ENCODE measurements at regions of chr12 and their contacts with region 1.

Region 1: GRCh38 chr12:111396726-111397445 is 8.8 kb upstream of the SH2B3 start:
- DNase-seq: peak; percentile 85 to 87
- ATAC-seq: peak; percentile 87 to 97
- H3K4me3 ChIP-seq: peak overlapping the region; percentile 33
- H3K27ac ChIP-seq: peak overlapping the region; percentile 66 to 83
- H3K4me1 ChIP-seq: peaks cover 6% of the 10 kb centered on the region; the same call in 1 of the 3 replicates
- CTCF ChIP-seq: peak; percentile 99
- EP300 ChIP-seq: no peak; a peak in 1 of 5 replicates
- POLR2A ChIP-seq: no peak
- RAD21 ChIP-seq: peak; percentile 96 to 97

Region 2: DNA sequence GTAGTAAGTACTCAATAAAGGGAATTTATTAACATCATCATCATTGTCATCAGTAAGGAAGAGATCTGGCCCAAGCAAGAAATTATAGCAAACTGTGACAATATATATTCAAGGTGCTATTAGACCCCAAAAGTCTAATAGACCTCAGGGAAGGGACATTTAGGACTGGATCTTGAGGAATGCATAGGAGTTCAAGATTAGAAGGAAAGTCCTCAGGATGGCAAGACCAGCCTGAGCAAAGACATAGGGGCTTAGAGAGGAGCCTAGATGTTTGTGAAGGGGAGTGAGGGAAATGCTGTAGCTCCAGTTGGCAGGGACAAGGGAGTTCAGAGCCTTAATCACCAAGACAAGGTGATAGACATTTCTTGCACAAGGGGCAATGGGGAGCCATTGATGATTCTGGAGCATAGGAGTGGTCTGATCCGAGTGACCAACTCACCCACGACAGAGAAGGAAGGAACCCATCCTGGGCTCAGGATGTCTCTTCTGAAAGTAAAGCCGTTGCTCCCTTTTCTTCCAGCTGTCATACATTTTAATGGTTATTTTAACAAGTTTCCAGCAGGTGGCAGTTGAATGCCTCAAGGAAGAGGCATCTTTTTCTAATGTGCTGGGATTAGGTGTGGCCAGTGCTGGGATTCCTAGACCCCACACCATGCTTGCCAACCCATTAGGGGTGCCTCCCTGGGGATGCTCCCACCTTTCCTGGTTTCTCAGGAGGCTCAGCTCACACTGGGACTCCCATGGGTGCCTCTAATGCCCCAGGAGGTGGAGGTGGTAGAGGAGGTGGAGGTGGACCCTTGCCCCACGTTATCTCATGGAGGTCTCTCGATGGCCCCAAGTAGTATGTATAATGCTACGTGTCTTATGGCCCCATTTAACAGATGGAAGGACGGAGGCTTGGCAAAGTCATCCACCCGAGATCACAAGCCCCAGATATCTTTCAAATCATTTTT is 65.8 kb before region 1 on chr12:
- CTCF ChIA-PET with region 1: interaction called, 44 read pairs
- POLR2A ChIA-PET with region 1: no interaction called
- DNase-seq: peak; percentile 74 to 78
- ATAC-seq: peak; percentile 71 to 82
- H3K4me3 ChIP-seq: no peak overlapping the region
- H3K27ac ChIP-seq: no peak overlapping the region
- H3K4me1 ChIP-seq: no peaks in the 10 kb centered on the region
- CTCF ChIP-seq: peak; percentile 64
- EP300 ChIP-seq: no peak
- POLR2A ChIP-seq: no peak
- RAD21 ChIP-seq: peak; percentile 63 to 77; a peak in 4 of 5 replicates

Region 3: DNA sequence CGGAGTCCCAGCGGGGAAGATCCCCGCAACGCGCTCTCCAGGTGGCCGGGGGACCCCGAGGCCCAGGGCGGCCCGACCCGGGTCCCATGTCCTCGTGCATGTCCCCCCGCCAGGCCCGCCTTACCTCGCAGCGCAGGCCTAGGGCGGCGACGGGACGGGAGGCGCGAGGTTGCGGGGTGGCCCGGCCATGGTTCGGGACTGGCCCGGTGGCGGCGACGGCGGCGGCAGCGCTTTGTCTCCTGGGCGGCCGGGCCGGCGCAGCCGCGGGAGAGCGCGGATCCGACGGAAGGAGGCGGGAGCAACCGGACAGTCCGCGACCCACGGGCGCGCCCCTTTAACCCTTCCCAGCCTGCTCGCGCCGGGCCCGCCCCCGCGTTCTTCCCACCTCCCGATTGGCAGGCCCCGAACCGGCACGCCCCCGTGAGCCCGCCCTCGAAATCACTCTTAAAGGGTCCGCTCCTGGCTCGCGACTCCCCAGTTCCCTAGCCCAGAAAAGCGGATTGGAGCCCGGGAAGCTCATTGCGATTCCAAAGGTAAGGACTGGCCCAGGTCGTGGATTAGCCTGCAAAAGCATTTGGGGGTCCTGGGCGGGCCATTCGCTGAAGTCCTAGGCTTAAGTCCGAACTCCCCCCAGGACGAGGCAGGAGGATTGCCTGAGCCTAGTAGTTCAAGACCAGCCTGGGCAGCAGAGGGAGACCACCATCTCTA is 27.9 kb before region 1 on chr12 and contains the start of gene PHETA1:
- CTCF ChIA-PET with region 1: interaction called, 36 read pairs
- POLR2A ChIA-PET with region 1: no interaction called
- DNase-seq: peak; percentile 87 to 94
- ATAC-seq: peak; percentile 95 to 97
- H3K4me3 ChIP-seq: peak within 1 kb of the TSS; percentile 91
- H3K27ac ChIP-seq: peak within 1 kb of the TSS; percentile 76 to 91
- H3K4me1 ChIP-seq: peaks cover 17% of the 10 kb centered on the region
- CTCF ChIP-seq: no peak
- EP300 ChIP-seq: no peak
- POLR2A ChIP-seq: peak; percentile 79
- RAD21 ChIP-seq: no peak
- polyA plus RNA-seq, gene PHETA1: 2.9 and 3.0 TPM in 2 replicates

Region 4: GRCh38 chr12:111417784-111418593 is 21.1 kb after region 1 on chr12:
- CTCF ChIA-PET with region 1: interaction called, 103 read pairs
- POLR2A ChIA-PET with region 1: no interaction called
- DNase-seq: no peak
- ATAC-seq: no peak
- H3K4me3 ChIP-seq: no peak overlapping the region
- H3K27ac ChIP-seq: no peak overlapping the region
- H3K4me1 ChIP-seq: peaks cover 12% of the 10 kb centered on the region; the same call in 2 of the 3 replicates
- CTCF ChIP-seq: no peak
- EP300 ChIP-seq: no peak
- POLR2A ChIP-seq: no peak
- RAD21 ChIP-seq: no peak

Region 5: DNA sequence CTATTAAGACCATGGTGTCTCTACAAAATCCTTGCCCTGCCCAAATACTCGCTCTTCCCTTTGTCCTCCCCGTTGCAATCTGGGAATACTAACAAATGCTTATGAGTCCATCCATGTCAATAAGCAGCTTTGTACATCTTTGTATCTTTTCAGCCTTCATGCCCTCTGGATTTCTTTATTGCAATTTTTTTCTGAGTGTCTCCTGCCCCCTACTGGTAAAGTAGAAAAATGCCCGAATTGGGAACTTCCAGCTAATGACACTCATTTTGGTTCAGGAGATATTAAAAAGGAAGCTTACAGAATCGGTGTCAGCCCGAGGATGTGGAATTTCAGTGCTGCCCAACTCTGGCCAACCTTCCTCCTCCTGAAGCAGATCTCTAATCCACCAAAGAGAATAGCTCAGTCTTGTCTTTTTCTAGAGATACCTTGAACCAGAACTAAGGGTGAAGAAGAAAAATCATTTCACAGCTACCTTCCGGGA is 54.8 kb after region 1 on chr12:
- CTCF ChIA-PET with region 1: interaction called, 240 read pairs
- POLR2A ChIA-PET with region 1: interaction called, 4 read pairs
- DNase-seq: peak; percentile 29 to 56
- ATAC-seq: peak in 1 of 2 experiments; percentile 34; a peak in 3 of 6 replicates
- H3K4me3 ChIP-seq: no peak overlapping the region
- H3K27ac ChIP-seq: no peak overlapping the region
- H3K4me1 ChIP-seq: no peaks in the 10 kb centered on the region
- CTCF ChIP-seq: peak; percentile 88
- EP300 ChIP-seq: no peak
- POLR2A ChIP-seq: no peak
- RAD21 ChIP-seq: peak; percentile 73

Region 6: GRCh38 chr12:111482462-111482861 is 85.6 kb after region 1 on chr12:
- CTCF ChIA-PET with region 1: interaction called, 11 read pairs
- POLR2A ChIA-PET with region 1: no interaction called
- DNase-seq: no peak
- ATAC-seq: peak; percentile 43 to 54; a peak in 2 of 6 replicates
- H3K4me3 ChIP-seq: no peak overlapping the region
- H3K27ac ChIP-seq: no peak overlapping the region
- H3K4me1 ChIP-seq: 0 out of 3 replicates have a peak, but pooled peaks cover under 1% of the 10 kb centered on the region
- CTCF ChIP-seq: peak; percentile 14; the same call in 1 of the 3 replicates
- EP300 ChIP-seq: no peak
- POLR2A ChIP-seq: no peak
- RAD21 ChIP-seq: no peak

Region 7: GRCh38 chr12:111685744-111686517 is 289.0 kb after region 1 on chr12 and contains the starts of genes ACAD10 and BRAP:
- CTCF ChIA-PET with region 1: interaction called, 12 read pairs
- POLR2A ChIA-PET with region 1: no interaction called
- DNase-seq: peak; percentile 96 to 97
- ATAC-seq: peak; percentile 93 to 96
- H3K4me3 ChIP-seq: peak within 1 kb of the TSS; percentile 89
- H3K27ac ChIP-seq: peak within 1 kb of the TSS; percentile 85 to 90
- H3K4me1 ChIP-seq: peaks cover 21% of the 10 kb centered on the region
- CTCF ChIP-seq: no peak
- EP300 ChIP-seq: no peak
- POLR2A ChIP-seq: peak; percentile 93
- RAD21 ChIP-seq: no peak
- polyA plus RNA-seq, gene ACAD10: 22.0 and 32.6 TPM in 2 replicates
- polyA plus RNA-seq, gene BRAP: 25.2 and 29.7 TPM in 2 replicates

Region 8: GRCh38 chr12:112283546-112283945 is 886.7 kb after region 1 on chr12:
- CTCF ChIA-PET with region 1: no interaction called
- POLR2A ChIA-PET with region 1: no interaction called
- DNase-seq: no peak
- ATAC-seq: no peak
- H3K4me3 ChIP-seq: no peak overlapping the region
- H3K27ac ChIP-seq: no peak overlapping the region
- H3K4me1 ChIP-seq: no peaks in the 10 kb centered on the region
- CTCF ChIP-seq: no peak
- EP300 ChIP-seq: no peak
- POLR2A ChIP-seq: no peak
- RAD21 ChIP-seq: no peak